H1 (cell line): ENCODE measurements at regions of chr2 and their contacts with region 1.

Region 1: GRCh38 chr2:138922973-138923563 is 142.9 kb upstream of the NXPH2 start:
- DNase-seq: no peak
- H3K4me3 ChIP-seq: no peak overlapping the region
- H3K27ac ChIP-seq: no peak overlapping the region
- H3K4me1 ChIP-seq: peaks cover 0 to 3% (median 0%) of the 10 kb centered on the region in 4 experiments; a peak in 1 of 7 replicates
- H3K27me3 ChIP-seq: no peaks in the 10 kb centered on the region
- CTCF ChIP-seq: peak in 2 of 3 experiments; percentile 27 to 46; a peak in 2 of 4 replicates
- EP300 ChIP-seq: no peak
- POLR2A ChIP-seq: no peak
- RAD21 ChIP-seq: peak in 1 of 2 experiments; percentile 67

Region 2: DNA sequence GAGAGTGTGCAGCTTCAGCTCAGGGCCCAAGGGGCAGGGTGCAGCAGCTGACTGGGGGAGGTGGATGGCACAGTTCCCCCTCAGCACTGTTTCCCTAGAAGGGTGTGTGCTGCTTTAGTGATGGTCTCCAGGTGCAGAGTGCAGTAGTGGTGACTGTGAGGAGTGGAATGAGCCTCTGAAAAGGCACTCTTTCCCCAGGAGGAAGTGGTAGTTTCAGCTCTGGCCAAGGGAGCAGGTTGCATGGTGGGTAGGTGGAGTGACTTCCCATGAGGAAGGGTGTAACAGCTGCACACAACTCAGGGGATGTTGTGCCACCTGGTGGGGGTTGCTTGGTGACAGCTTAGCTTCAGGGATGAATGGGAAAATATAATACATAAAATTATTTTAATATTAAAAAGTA is 108.7 kb after region 1 on chr2:
- CTCF ChIA-PET with region 1: interaction called, 30 read pairs
- POLR2A ChIA-PET with region 1: no interaction called
- DNase-seq: no peak
- H3K4me3 ChIP-seq: no peak overlapping the region
- H3K27ac ChIP-seq: no peak overlapping the region
- H3K4me1 ChIP-seq: no peaks in the 10 kb centered on the region
- H3K27me3 ChIP-seq: no peaks in the 10 kb centered on the region
- CTCF ChIP-seq: peak; percentile 26 to 43 (median 33); a peak in 3 of 4 replicates
- EP300 ChIP-seq: no peak
- POLR2A ChIP-seq: no peak
- RAD21 ChIP-seq: peak; percentile 53 to 65